GM12878 (cell line): ENCODE measurements at regions of chr10 and their contacts with region 1.

Region 1: DNA sequence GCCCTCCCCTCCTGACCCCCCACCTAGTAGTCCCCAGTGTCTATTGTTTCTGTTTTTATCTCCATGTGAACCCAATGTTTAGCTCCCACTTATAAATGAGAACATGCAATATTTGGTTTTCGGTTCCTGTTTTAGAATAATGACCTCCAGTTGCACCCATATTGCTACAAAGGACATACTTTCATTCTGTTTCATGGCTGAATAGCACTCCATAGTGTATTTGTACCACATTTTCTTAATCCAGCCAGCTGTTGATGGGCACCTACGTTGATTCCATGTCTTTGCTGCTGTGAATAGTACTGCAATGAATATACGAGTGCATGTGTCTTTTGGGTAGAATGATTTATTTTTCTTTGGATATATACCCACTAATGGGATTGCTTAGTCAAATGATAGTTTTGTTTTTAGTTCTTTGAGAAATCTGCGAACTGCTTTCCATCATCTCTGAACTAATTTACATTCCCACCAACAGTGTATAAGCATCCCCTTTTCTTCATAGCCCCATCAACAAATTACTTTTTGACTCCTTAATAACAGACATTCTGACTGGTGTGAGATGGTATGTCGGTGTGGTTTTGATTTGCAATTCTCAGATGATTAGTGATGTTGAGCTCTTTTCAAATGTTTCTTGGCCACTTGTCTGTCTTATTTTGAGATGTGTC is 128.4 kb upstream of the PHYHIPL start:
- DNase-seq: peak; percentile 84
- ATAC-seq: peak; percentile 90
- H3K4me3 ChIP-seq: peak overlapping the region; percentile 33; the same call in 1 of the 2 replicates
- H3K27ac ChIP-seq: peak overlapping the region; percentile 65
- H3K4me1 ChIP-seq: peaks cover 15% of the 10 kb centered on the region
- H3K27me3 ChIP-seq: no peaks in the 10 kb centered on the region; a peak in 1 of 4 replicates
- CTCF ChIP-seq: no peak
- EP300 ChIP-seq: peak; percentile 68 to 97
- POLR2A ChIP-seq: no peak
- RAD21 ChIP-seq: peak; percentile 27; the same call in 1 of the 2 replicates

Region 2: DNA sequence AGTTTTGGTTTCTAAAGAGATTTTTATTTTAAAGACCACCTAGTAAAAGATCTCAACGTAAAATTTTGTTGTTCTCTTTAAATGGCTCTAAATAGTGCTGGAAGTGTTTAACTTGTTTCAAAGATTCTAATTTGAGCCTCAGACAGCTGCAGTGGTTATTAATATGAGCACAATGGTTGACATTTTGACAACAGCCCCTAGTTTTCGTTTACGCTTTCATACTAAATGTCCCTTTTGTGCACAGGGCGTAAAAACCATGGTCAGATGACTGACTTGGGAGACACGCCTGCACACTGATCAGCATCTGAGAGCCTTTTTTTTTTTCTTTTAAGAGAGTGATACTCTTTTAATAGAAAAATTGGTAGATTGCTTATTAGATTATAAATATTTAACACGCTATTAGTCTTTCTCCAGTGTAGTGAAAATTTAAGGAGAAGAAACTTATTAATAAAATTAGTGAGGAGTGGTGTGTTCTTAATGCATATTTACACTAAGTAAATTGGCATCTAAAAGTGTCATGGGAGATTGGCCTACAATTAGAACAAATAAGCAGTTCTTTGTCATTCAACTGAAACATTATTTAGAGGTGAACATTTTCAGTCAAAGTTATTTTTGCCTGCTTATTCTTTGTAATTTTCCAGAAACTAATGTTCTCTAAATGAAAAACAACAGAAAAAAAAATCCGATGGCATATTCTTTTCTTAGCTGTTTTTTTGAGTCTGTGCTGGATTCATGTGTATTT is 54.4 kb before region 1 on chr10:
- CTCF ChIA-PET with region 1: interaction called, 17 read pairs
- POLR2A ChIA-PET with region 1: interaction called, 11 read pairs
- RAD21 ChIA-PET with region 1: interaction called, 139 read pairs
- SMC1A ChIA-PET with region 1: interaction called, 104 read pairs
- in situ Hi-C with region 1: no loop called
- intact Hi-C with region 1: loop called (anchors 1 kb)
- DNase-seq: peak; percentile 63
- ATAC-seq: peak; percentile 88
- H3K4me3 ChIP-seq: no peak overlapping the region
- H3K27ac ChIP-seq: peak overlapping the region; percentile 31; the same call in 1 of the 2 replicates
- H3K4me1 ChIP-seq: peaks cover 38% of the 10 kb centered on the region
- H3K27me3 ChIP-seq: no peaks in the 10 kb centered on the region
- CTCF ChIP-seq: no peak
- EP300 ChIP-seq: peak; percentile 75 to 95; a peak in 3 of 4 replicates
- POLR2A ChIP-seq: no peak
- RAD21 ChIP-seq: peak; percentile 19; the same call in 1 of the 2 replicates

Region 3: DNA sequence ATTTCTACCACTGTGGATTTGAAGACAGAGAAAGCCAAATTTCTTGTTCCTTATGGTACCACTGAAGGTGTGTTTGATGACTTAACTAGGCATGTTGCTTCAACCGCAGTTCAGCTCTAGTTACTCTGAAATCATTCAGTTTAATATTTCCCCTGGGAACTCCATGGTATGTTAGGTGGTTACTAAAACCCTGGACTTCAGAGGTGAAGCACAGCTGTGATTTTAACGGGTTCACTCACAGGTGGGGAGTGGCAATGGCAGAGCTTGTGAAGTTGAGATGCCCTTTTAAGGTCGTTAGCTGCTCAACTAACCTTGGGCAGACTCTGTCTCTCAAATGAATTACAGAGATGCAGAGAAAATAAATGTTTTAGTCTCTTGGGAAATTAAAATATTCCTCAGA is 35.2 kb before region 1 on chr10:
- CTCF ChIA-PET with region 1: interaction called, 8 read pairs
- POLR2A ChIA-PET with region 1: interaction called, 6 read pairs
- RAD21 ChIA-PET with region 1: interaction called, 26 read pairs
- SMC1A ChIA-PET with region 1: interaction called, 30 read pairs
- in situ Hi-C with region 1: no loop called
- intact Hi-C with region 1: loop called (anchors 2 kb)
- DNase-seq: no peak
- ATAC-seq: peak; percentile 79
- H3K4me3 ChIP-seq: no peak overlapping the region
- H3K27ac ChIP-seq: no peak overlapping the region
- H3K4me1 ChIP-seq: no peaks in the 10 kb centered on the region; the same call in 1 of the 2 replicates
- H3K27me3 ChIP-seq: no peaks in the 10 kb centered on the region
- CTCF ChIP-seq: no peak
- EP300 ChIP-seq: 0 out of 4 replicates have a peak, but pooled peaks of 1 of the 2 experiments have one; percentile 10
- POLR2A ChIP-seq: no peak
- RAD21 ChIP-seq: no peak

Region 4: GRCh38 chr10:59073456-59074053 is 25.5 kb after region 1 on chr10:
- CTCF ChIA-PET with region 1: interaction called, 3 read pairs
- POLR2A ChIA-PET with region 1: interaction called, 15 read pairs
- RAD21 ChIA-PET with region 1: interaction called, 60 read pairs
- SMC1A ChIA-PET with region 1: interaction called, 55 read pairs
- in situ Hi-C with region 1: no loop called
- intact Hi-C with region 1: loop called (anchors 2 kb)
- DNase-seq: no peak
- ATAC-seq: peak; percentile 14; the same call in 1 of the 3 replicates
- H3K4me3 ChIP-seq: no peak overlapping the region
- H3K27ac ChIP-seq: no peak overlapping the region
- H3K4me1 ChIP-seq: no peaks in the 10 kb centered on the region
- H3K27me3 ChIP-seq: no peaks in the 10 kb centered on the region
- CTCF ChIP-seq: no peak
- EP300 ChIP-seq: no peak
- POLR2A ChIP-seq: no peak
- RAD21 ChIP-seq: no peak

Region 5: DNA sequence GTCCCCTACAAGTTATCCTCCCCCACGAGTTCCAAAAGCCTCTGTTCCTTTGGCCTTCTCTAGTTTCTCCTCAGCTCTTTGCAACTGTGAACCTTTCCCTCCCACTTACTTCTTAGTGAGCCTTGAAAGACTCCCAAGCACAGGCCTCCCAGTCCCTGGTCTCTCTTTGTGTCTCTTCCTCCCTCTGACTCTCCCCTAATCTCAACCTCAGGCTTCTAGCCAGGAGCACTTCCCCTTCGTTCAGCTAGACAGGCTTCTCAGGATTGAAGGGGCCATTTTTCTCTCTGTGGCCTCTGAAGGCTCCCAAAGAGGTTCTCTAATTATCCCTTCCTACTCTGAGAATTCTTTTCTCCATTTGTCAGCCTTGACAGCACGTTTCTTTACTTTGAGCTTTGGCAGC is 78.2 kb after region 1 on chr10:
- CTCF ChIA-PET with region 1: no interaction called
- POLR2A ChIA-PET with region 1: interaction called, 4 read pairs
- RAD21 ChIA-PET with region 1: interaction called, 10 read pairs
- SMC1A ChIA-PET with region 1: interaction called, 19 read pairs
- in situ Hi-C with region 1: no loop called
- intact Hi-C with region 1: no loop called
- DNase-seq: no peak
- ATAC-seq: peak; percentile 53
- H3K4me3 ChIP-seq: no peak overlapping the region
- H3K27ac ChIP-seq: no peak overlapping the region
- H3K4me1 ChIP-seq: no peaks in the 10 kb centered on the region; the same call in 1 of the 2 replicates
- H3K27me3 ChIP-seq: no peaks in the 10 kb centered on the region
- CTCF ChIP-seq: no peak
- EP300 ChIP-seq: no peak
- POLR2A ChIP-seq: no peak
- RAD21 ChIP-seq: no peak